ENCODE measurements at regions of chr2 and their contacts with region 1.

Region 1: GRCh38 chr2:37982147-37982582 is 57.1 kb downstream of the RMDN2 start:
- DNase-seq: peak; percentile 51 to 80
- ATAC-seq: peak in 5 of 8 donors; percentile 23 to 62 (median 53)
- H3K4me3 ChIP-seq: peak overlapping the region in 8 of 10 donors; percentile 4 to 45 (median 34)
- H3K27ac ChIP-seq: no peak overlapping the region
- H3K4me1 ChIP-seq: peaks cover 0 to 14% (median 0%) of the 10 kb centered on the region in 9 donors
- H3K27me3 ChIP-seq: no peaks in the 10 kb centered on the region
- CTCF ChIP-seq: peak; percentile 82 to 94 (median 87)

Region 2: GRCh38 chr2:37653805-37654378 is 328.3 kb before region 1 on chr2:
- intact Hi-C with region 1: no loop called
- DNase-seq: peak; percentile 68
- ATAC-seq: peak; percentile 59 to 86 (median 76)
- H3K4me3 ChIP-seq: peak overlapping the region in 7 of 10 donors; percentile 6 to 40 (median 17)
- H3K27ac ChIP-seq: peak overlapping the region; percentile 77 to 99 (median 90)
- H3K4me1 ChIP-seq: peaks cover 46 to 100% (median 97%) of the 10 kb centered on the region in 9 donors
- H3K27me3 ChIP-seq: no peaks in the 10 kb centered on the region
- CTCF ChIP-seq: no peak

Region 3: GRCh38 chr2:38115216-38116032 is 133.3 kb after region 1 on chr2:
- intact Hi-C with region 1: loop called in 9 of 10 experiments (anchors 2 to 10 kb)
- DNase-seq: peak; percentile 73 to 89
- ATAC-seq: peak in 7 of 8 donors; percentile 57 to 85 (median 76)
- H3K4me3 ChIP-seq: no peak overlapping the region
- H3K27ac ChIP-seq: peak overlapping the region in 8 of 10 donors; percentile 15 to 73 (median 63)
- H3K4me1 ChIP-seq: peaks cover 2 to 64% (median 37%) of the 10 kb centered on the region in 9 donors
- H3K27me3 ChIP-seq: no peaks in the 10 kb centered on the region
- CTCF ChIP-seq: peak; percentile 87 to 98 (median 94)